Right ventricle myocardium inferior (tissue), 1 donor: ENCODE measurements at regions of chr15 and their contacts with region 1.

Region 1: GRCh38 chr15:41917767-41918430 is 24.0 kb upstream of the SPTBN5 start:
- DNase-seq: no peak
- ATAC-seq: peak; percentile 43

Region 2: DNA sequence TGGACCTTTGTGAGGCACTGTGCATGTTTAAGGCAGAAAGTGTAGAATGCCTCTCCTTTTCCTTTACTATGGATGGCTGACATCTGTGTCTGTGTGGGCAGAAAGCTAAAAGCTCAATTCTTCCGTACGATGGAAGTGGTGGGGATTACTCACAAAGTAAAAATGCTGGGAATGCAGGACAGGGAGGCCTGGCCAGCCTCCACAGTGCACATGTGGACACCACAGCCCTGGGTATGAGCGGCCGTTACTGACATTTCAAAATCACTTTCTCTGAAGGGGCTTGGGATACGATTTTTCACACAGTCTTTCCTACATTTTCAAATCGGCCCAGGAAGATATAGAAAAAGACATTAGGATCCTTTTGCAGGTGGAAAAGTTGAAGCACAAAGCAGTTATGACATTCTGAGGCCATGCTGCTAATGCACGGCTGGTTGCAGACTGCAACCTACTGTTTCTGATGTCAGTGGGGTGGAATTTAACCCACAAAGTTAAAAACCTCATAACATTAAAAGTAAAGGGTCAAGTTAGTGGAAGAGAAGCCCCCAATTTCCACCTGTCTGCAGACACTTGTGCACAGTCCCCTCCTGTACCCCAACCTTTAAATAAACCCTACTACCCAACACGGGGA is 26.5 kb after region 1 on chr15:
- intact Hi-C with region 1: loop called (anchors 2 kb)
- DNase-seq: no peak
- ATAC-seq: peak; percentile 49

Region 3: GRCh38 chr15:41972253-41973242 is 54.6 kb after region 1 on chr15 and contains the start of gene EHD4:
- intact Hi-C with region 1: loop called (anchors 2 kb)
- DNase-seq: peak; percentile 100
- ATAC-seq: peak; percentile 96
- total RNA-seq, gene EHD4: 55.5 TPM